Thyroid gland (tissue), 4 donors: ENCODE measurements at regions of chr19 and their contacts with region 1.

Region 1: GRCh38 chr19:46265217-46265828 is 31.5 kb upstream of the HIF3A start:
- DNase-seq: peak; percentile 64 to 68
- H3K4me3 ChIP-seq: no peak overlapping the region
- H3K27ac ChIP-seq: no peak overlapping the region
- H3K4me1 ChIP-seq: peaks cover 0 to 4% of the 10 kb centered on the region in 2 donors
- H3K27me3 ChIP-seq: no peaks in the 10 kb centered on the region
- CTCF ChIP-seq: peak; percentile 61 to 97 (median 91)
- POLR2A ChIP-seq: no peak

Region 2: DNA sequence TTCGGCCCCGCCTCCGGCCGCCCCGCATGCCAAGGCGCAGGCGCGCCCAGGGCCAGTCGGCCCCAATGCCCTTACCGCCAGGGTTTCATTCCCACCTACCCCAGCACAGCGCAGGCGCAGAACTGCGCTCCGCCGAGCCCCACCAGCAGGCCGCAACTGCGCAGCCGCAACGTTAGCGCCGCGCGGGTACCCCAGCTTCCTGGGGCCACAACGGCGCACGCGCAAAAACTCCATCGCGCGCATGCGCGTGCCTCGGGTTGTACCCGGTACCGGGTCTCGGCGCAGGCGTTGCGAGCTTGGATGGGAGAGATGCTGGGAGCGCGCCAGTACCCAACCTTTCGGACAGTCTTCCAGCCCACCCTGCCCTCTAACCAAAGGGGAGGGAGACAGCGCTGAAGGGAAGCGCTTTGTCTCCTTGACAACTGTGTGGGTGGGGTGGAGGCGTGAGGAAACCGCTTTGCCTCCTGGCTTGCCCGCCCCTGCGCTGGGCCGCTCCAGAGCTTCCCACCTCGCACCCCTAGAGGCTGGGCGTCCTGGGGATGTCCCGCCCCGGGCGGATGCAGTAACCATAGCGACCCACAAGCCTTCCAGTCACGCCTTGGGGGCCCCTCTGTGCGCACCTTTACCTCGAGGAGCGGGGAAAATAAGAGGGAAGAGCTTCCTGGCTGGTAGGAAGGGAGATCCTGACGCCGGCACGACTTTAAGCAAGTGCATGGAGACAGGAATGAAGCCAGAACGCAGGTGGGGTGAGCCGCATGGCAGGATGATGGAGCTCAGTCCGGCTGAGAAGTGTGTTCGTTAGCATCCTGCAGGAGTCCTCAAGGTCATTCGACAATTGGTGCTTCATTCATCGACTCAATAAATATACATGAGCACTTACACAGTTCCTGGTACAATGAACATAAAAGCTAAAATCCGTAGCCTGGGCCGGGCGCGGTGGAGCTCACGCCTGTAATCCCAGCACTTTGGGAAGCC is 362.4 kb before region 1 on chr19:
- intact Hi-C with region 1: no loop called
- DNase-seq: peak; percentile 98
- H3K4me3 ChIP-seq: peak overlapping the region in 2 of 3 donors; percentile 47 to 61
- H3K27ac ChIP-seq: peak overlapping the region; percentile 49 to 75 (median 67)
- H3K4me1 ChIP-seq: peaks cover 14 to 23% of the 10 kb centered on the region in 2 donors
- H3K27me3 ChIP-seq: no peaks in the 10 kb centered on the region
- CTCF ChIP-seq: peak in 2 of 6 experiments; percentile 18
- POLR2A ChIP-seq: peak; percentile 20 to 79

Region 3: GRCh38 chr19:45947926-45948325 is 317.4 kb before region 1 on chr19:
- intact Hi-C with region 1: no loop called
- DNase-seq: no peak
- H3K4me3 ChIP-seq: no peak overlapping the region
- H3K27ac ChIP-seq: no peak overlapping the region
- H3K4me1 ChIP-seq: peaks cover 3 to 4% of the 10 kb centered on the region in 2 donors
- H3K27me3 ChIP-seq: no peaks in the 10 kb centered on the region
- CTCF ChIP-seq: no peak
- POLR2A ChIP-seq: no peak

Region 4: DNA sequence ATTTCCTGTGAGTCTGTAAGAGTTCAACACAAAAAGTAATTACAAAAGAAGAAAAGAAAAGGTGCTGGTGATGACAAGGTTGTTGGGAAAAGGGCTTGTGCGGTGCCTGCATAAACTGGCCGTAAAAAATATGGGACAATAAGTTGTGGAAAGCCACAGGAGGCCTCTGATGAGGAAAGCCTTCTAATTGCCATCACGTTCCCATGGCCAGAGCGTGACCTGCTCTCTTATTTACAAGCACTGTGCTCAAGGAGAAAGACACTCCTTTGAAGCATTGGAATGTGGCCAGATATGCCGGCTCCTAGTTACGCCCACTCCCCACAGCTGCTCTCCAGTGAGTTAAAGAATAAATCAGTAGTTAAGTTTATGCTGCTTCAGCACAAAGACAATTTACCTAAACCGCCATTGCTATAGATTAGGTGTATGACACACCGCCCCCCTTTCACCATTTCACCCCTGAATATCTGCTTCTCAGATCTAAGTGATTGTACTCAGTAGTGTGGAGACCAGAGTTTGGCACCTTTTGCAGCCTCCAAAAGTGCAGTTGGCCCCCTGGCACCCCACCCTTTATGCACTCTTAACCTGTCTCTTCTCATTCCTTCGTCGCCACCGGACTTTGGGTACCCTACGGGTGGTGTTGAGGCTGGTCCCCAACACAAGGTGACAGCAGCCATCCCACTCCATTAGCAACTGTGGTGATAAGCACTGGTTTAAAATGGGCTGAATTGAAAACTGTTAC is 234.3 kb before region 1 on chr19:
- intact Hi-C with region 1: loop called (anchors 5 kb)
- DNase-seq: no peak
- H3K4me3 ChIP-seq: no peak overlapping the region
- H3K27ac ChIP-seq: no peak overlapping the region
- H3K4me1 ChIP-seq: no peaks in the 10 kb centered on the region
- H3K27me3 ChIP-seq: no peaks in the 10 kb centered on the region
- CTCF ChIP-seq: no peak
- POLR2A ChIP-seq: no peak

Region 5: DNA sequence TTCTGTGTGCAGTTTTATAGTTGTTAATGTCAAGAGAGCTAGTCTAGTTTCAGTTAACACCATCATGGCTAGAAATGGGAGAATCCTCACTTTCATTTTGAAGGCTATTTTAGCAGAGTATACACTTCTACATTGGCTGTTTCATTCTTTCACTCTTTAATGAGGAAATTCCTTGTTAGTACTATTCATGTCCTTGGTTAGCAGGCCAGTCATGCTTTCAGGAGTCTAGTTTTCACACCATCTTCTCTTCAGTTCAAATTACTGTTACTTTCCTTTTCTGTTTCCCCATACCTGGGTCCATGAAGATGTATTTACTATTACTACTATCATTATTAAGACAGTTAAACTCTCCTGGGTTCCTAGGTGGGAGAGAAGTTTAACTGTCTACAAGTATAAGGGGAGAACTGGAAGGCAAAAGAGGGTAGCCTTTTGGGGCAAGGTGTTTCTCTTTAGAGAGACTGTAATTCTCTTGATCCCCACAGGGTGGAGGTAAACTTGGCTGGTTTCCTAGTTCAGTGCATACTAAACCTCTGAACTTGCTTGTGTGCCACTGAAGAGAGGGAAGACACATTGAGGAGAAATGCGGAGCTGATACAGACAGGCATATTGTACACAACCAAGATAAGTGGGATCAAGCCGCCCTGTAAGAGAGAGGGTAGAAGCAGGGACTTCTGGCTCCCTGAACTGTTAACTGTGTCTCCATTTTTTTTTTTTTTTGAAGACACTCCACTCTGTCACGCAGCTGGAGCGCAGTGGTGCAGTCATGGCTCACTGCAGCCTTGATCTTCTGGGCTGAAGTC is 183.2 kb before region 1 on chr19:
- intact Hi-C with region 1: loop called (anchors 2 kb)
- DNase-seq: peak; percentile 20 to 42
- H3K4me3 ChIP-seq: no peak overlapping the region
- H3K27ac ChIP-seq: no peak overlapping the region
- H3K4me1 ChIP-seq: peaks cover under 1 to 3% of the 10 kb centered on the region in 2 donors
- H3K27me3 ChIP-seq: peaks cover 12% of the 10 kb centered on the region
- CTCF ChIP-seq: peak; percentile 5 to 84 (median 72)
- POLR2A ChIP-seq: no peak

Region 6: DNA sequence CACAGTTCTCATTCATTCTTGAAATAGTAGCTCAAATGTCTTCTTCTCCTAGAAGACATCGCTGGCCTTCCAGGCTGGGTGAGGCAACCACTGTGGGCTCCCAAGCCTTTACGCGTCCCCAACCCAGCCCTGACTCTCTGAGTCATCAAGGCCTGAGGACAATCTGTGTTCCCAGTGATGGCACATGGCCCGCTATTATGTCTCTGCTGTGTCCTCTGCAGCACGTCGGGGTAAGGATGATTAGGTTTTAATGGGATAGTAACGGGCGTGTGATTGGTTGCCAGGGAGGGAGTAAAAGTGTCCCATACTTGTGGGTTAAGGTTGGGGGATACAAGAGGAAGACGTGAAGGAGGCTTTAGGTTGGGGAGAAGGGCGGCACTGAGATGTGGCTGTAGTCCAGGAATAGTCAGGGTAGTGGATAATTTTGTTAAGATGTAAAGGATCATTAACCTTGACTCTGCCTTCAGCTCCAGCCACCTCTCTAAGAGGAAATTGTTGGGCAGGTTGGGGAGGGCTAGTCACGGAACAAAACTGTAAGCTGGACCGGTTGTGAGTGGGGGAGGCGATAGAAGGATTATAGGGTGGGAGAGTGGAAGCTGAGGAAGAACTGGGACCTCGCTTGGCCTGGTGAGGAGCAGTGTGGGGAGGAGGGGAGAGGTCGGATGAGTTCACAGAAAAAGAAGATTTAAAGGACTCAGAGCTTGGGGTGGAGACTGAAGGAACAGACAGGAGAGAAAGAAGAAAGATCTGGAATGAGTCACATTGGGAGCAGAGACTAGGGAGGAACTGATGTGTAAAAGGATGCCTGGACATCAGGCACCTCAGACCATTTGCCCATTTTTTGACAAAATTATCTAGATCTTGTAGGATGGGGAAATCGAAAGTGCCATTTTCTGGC is 63.7 kb before region 1 on chr19:
- intact Hi-C with region 1: no loop called
- DNase-seq: no peak
- H3K4me3 ChIP-seq: no peak overlapping the region
- H3K27ac ChIP-seq: no peak overlapping the region
- H3K4me1 ChIP-seq: no peaks in the 10 kb centered on the region
- H3K27me3 ChIP-seq: no peaks in the 10 kb centered on the region
- CTCF ChIP-seq: no peak
- POLR2A ChIP-seq: no peak

Region 7: GRCh38 chr19:46213103-46213775 is 52.1 kb before region 1 on chr19:
- intact Hi-C with region 1: no loop called
- DNase-seq: no peak
- H3K4me3 ChIP-seq: no peak overlapping the region
- H3K27ac ChIP-seq: no peak overlapping the region
- H3K4me1 ChIP-seq: peaks cover 6 to 13% of the 10 kb centered on the region in 2 donors
- H3K27me3 ChIP-seq: no peaks in the 10 kb centered on the region
- CTCF ChIP-seq: no peak
- POLR2A ChIP-seq: no peak